Adrenal gland (tissue), 19 donors: ENCODE measurements at regions of chr15 and their contacts with region 1.

Region 1: DNA sequence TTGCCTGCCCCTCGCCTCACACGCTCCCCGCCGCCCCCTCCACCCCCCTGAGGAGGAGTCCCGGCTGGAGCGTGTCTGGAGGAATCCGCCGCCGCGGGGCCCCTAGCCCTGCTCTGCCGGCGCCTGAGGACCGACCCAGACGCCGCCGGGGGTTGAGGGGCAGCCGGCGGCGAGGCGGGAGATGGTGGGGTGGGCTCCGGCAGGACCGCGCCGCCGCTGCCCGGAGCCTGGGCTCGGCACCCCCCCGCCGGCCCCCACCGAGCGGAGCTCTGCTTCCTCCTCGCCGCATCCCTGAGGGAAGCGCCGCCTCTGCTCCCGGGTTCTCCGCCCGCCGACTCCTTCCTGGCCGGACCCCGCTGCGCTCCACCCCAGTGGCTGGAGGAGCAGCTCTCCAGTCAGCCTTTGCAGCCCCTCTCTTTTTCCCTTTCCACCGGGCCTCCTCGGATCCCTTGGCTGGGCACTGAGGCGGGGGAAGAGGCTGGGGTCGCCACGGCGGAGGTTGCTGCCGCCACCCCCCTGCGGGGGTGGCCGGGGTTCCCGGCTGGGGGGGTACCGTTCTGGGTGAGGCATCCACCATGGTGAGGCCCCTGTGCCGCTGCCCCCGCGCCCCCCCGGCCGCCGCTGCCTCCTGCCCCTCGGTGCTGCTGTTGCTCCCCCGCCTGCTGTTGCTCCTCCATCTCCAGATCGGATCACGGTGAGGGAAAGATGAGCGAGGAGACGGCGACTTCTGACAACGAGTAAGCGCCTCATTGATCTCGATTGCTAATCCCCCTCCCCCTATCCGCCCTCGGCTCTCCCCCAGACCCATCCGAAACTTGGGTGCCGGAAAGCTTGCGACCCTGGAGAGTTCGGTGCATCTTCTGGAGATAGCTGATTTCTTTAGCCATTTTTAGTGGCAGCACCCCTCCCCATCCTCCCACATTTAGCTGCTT is at the start of gene SPRED1:
- DNase-seq: peak; percentile 69 to 77 (median 75)
- H3K4me3 ChIP-seq: peak within 1 kb of the TSS; percentile 7 to 95 (median 86)
- H3K27ac ChIP-seq: peak within 1 kb of the TSS; percentile 93 to 99 (median 98)
- H3K4me1 ChIP-seq: peaks cover 0 to 39% of the 10 kb centered on the region in 2 donors
- H3K27me3 ChIP-seq: no peaks in the 10 kb centered on the region
- CTCF ChIP-seq: no peak
- POLR2A ChIP-seq: no peak
- total RNA-seq, gene SPRED1: 8.8 to 31.3 (median 25.1) TPM

Region 2: GRCh38 chr15:38072348-38073177 is 180.2 kb before region 1 on chr15:
- intact Hi-C with region 1: loop called in 1 of 2 experiments (anchors 5 kb)
- DNase-seq: peak; percentile 62 to 75 (median 66)
- H3K4me3 ChIP-seq: peak overlapping the region in 2 of 4 donors; percentile 66 to 69
- H3K27ac ChIP-seq: peak overlapping the region; percentile 10 to 95 (median 92)
- H3K4me1 ChIP-seq: peaks cover 14 to 42% of the 10 kb centered on the region in 2 donors
- H3K27me3 ChIP-seq: no peaks in the 10 kb centered on the region
- CTCF ChIP-seq: peak in 1 of 6 experiments; percentile 6
- POLR2A ChIP-seq: peak in 1 of 2 donors; percentile 52

Region 3: DNA sequence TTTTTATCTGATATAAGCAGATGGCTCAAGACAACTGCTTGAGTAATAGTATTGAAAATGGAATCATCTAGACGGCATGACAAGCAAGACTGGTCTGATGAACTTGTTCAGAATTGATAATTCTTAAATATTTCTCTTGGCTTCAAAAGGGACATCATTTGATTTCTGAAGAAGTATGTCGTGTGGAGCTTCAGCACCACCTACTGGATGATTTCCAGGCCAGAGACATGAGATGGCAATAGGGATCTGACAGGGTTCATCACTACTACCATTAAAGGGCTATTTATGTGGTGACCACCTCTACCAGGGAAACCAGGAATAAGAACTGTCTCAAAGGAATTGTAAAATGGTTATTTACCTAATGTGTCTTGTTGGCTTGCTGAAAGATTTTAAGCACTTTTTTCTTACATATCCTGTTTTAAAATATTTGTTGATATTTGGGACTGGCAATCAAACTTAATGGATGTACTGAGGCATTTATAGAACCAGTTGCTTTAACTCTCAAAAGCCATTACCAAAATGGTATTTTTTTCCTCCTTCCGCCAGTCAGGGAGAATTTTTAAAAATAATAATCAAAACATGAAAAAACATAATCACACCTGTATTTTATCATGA is 101.7 kb after region 1 on chr15:
- intact Hi-C with region 1: loop called (anchors 10 kb)
- DNase-seq: peak; percentile 61 to 89 (median 68)
- H3K4me3 ChIP-seq: no peak overlapping the region
- H3K27ac ChIP-seq: no peak overlapping the region
- H3K4me1 ChIP-seq: peaks cover 0 to 5% of the 10 kb centered on the region in 2 donors
- H3K27me3 ChIP-seq: no peaks in the 10 kb centered on the region
- CTCF ChIP-seq: peak; percentile 66 to 89 (median 83)
- POLR2A ChIP-seq: no peak